Activated CD4-positive, alpha-beta T cell treated with anti-CD3 and anti-CD28 coated beads for 36 hours (primary cell): ENCODE measurements at regions of chr1 and their contacts with region 1.

Region 1: GRCh38 chr1:220099826-220100225 is 5.9 kb downstream of the IARS2 start:
- DNase-seq: no peak
- ATAC-seq: no peak
- H3K4me3 Mint-ChIP-seq: no peak overlapping the region
- H3K27ac Mint-ChIP-seq: peak overlapping the region; percentile 47
- H3K4me1 Mint-ChIP-seq: peaks cover 16% of the 10 kb centered on the region
- H3K27me3 Mint-ChIP-seq: no peaks in the 10 kb centered on the region

Region 2: DNA sequence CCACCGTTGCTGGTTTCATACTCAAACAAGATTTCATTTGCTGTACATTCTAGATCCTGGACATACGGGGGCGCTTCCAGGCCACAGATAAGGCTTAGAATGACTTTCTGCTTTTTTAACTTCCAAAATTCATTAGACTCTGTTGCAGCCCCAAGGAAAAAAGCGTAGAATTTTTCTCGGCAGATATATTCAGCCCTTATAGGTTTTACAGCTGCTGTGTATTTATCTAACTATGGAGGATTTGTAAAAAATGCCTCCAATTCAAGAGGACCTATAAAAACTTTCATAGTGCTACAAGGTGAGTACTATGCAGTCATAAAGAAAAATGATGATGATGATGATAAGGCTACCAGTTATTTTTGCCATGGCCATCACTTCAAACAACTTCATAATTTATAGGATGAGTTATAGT is 223.0 kb before region 1 on chr1:
- CTCF ChIA-PET with region 1: no interaction called
- POLR2A ChIA-PET with region 1: no interaction called
- intact Hi-C with region 1: no loop called
- DNase-seq: no peak
- ATAC-seq: no peak
- H3K4me3 Mint-ChIP-seq: no peak overlapping the region
- H3K27ac Mint-ChIP-seq: no peak overlapping the region
- H3K4me1 Mint-ChIP-seq: no peaks in the 10 kb centered on the region
- H3K27me3 Mint-ChIP-seq: peaks cover 2% of the 10 kb centered on the region

Region 3: GRCh38 chr1:219990782-219991510 is 108.9 kb before region 1 on chr1:
- CTCF ChIA-PET with region 1: interaction called, 3 read pairs
- POLR2A ChIA-PET with region 1: no interaction called
- intact Hi-C with region 1: loop called in 1 of 2 experiments (anchors 5 kb)
- DNase-seq: no peak
- ATAC-seq: no peak
- H3K4me3 Mint-ChIP-seq: no peak overlapping the region
- H3K27ac Mint-ChIP-seq: no peak overlapping the region
- H3K4me1 Mint-ChIP-seq: no peaks in the 10 kb centered on the region
- H3K27me3 Mint-ChIP-seq: no peaks in the 10 kb centered on the region